ENCODE measurements at regions of chr3 and their contacts with region 1.

Region 1: DNA sequence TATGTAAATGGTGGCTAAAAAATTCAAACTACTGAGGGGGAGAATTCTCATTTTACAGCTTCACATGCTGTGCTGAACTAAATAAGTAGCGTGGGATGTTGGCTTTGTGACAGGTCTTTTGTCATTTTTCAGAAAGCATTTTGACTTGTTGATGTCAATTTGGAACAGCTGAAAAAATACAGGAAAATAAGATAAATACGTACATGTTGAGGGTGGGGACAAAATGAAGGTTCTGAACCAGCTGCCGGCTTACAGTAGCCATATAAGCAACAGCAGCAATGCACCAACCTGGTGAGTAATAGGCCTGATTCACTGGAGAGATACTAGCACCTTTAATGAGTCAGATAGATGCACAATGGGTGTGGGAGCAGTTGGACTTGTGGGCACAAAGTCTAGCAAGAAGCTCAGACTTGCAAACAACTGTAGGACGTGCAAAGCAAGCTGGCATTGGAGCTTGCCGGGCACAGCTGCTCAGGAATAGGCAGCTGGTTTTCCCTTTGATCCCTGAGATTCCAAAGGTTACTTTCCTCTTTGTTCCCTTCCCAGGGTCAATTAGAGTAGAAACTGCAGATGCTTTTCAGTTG is 12.9 kb downstream of the B3GNT5 start:
- DNase-seq: peak; percentile 65
- H3K4me3 Mint-ChIP-seq: no peak overlapping the region
- H3K27ac Mint-ChIP-seq: no peak overlapping the region
- H3K4me1 Mint-ChIP-seq: peaks cover 19% of the 10 kb centered on the region
- H3K27me3 Mint-ChIP-seq: no peaks in the 10 kb centered on the region

Region 2: DNA sequence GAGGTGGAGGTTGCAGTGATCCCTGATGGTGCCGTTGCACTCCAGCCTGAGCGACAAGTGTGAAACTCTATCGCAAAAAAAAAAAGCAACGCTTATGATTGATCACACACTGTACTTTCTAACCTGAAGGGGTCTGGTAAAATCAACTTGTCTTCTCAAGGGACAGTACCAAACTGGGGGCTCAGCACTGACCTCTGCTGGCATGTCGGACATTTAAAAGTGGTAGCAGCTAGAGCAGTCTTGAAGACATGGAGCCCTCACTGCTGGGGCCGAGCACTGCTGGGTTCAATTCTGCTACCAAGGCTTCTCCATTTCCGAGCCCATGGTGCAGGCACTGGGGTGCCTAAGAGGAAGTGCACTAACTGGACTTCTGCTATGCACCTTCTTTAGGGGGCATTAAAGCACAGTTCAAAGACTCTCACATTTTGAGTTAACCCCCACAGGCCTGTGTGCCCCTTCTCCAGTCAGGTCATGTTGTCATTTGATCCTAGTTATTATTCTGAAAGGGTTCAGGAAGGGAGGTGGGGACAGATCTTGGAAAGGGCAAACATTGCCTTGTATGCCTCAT is 76.9 kb before region 1 on chr3:
- intact Hi-C with region 1: loop called (anchors 5 kb)
- DNase-seq: peak; percentile 69
- H3K4me3 Mint-ChIP-seq: no peak overlapping the region
- H3K27ac Mint-ChIP-seq: no peak overlapping the region
- H3K4me1 Mint-ChIP-seq: peaks cover 15% of the 10 kb centered on the region
- H3K27me3 Mint-ChIP-seq: no peaks in the 10 kb centered on the region

Region 3: GRCh38 chr3:183210839-183211341 is 55.0 kb before region 1 on chr3:
- intact Hi-C with region 1: loop called (anchors 5 kb)
- DNase-seq: no peak
- H3K4me3 Mint-ChIP-seq: peak overlapping the region; percentile 4
- H3K27ac Mint-ChIP-seq: peak overlapping the region; percentile 50
- H3K4me1 Mint-ChIP-seq: peaks cover 20% of the 10 kb centered on the region
- H3K27me3 Mint-ChIP-seq: peaks cover 2% of the 10 kb centered on the region

Region 4: GRCh38 chr3:183224180-183224970 is 41.6 kb before region 1 on chr3:
- intact Hi-C with region 1: loop called (anchors 1 kb)
- DNase-seq: peak; percentile 85
- H3K4me3 Mint-ChIP-seq: peak overlapping the region; percentile 74
- H3K27ac Mint-ChIP-seq: peak overlapping the region; percentile 73
- H3K4me1 Mint-ChIP-seq: peaks cover 32% of the 10 kb centered on the region
- H3K27me3 Mint-ChIP-seq: no peaks in the 10 kb centered on the region

Region 5: GRCh38 chr3:183252973-183253901 is 12.7 kb before region 1 on chr3 and contains the start of gene B3GNT5:
- intact Hi-C with region 1: loop called (anchors 1 kb)
- DNase-seq: peak; percentile 81
- H3K4me3 Mint-ChIP-seq: peak within 1 kb of the TSS; percentile 84
- H3K27ac Mint-ChIP-seq: peak within 1 kb of the TSS; percentile 72
- H3K4me1 Mint-ChIP-seq: peaks cover 16% of the 10 kb centered on the region
- H3K27me3 Mint-ChIP-seq: peaks cover 12% of the 10 kb centered on the region
- total RNA-seq, gene B3GNT5: 25.0 and 27.9 TPM in 2 replicates

Region 6: GRCh38 chr3:183306798-183307671 is 41.1 kb after region 1 on chr3:
- intact Hi-C with region 1: loop called (anchors 1 kb)
- DNase-seq: peak; percentile 79
- H3K4me3 Mint-ChIP-seq: peak overlapping the region; percentile 20
- H3K27ac Mint-ChIP-seq: peak overlapping the region; percentile 65
- H3K4me1 Mint-ChIP-seq: peaks cover 28% of the 10 kb centered on the region
- H3K27me3 Mint-ChIP-seq: no peaks in the 10 kb centered on the region

Region 7: GRCh38 chr3:183377307-183377959 is 111.5 kb after region 1 on chr3:
- intact Hi-C with region 1: loop called (anchors 5 kb)
- DNase-seq: no peak
- H3K4me3 Mint-ChIP-seq: no peak overlapping the region
- H3K27ac Mint-ChIP-seq: peak overlapping the region; percentile 71
- H3K4me1 Mint-ChIP-seq: peaks cover 25% of the 10 kb centered on the region
- H3K27me3 Mint-ChIP-seq: no peaks in the 10 kb centered on the region

Region 8: GRCh38 chr3:183392186-183393034 is 126.5 kb after region 1 on chr3:
- intact Hi-C with region 1: no loop called
- DNase-seq: no peak
- H3K4me3 Mint-ChIP-seq: no peak overlapping the region
- H3K27ac Mint-ChIP-seq: no peak overlapping the region
- H3K4me1 Mint-ChIP-seq: peaks cover 5% of the 10 kb centered on the region
- H3K27me3 Mint-ChIP-seq: peaks cover 3% of the 10 kb centered on the region